OCI-LY7 (cell line): ENCODE measurements at regions of chr17 and their contacts with region 1.

Region 1: DNA sequence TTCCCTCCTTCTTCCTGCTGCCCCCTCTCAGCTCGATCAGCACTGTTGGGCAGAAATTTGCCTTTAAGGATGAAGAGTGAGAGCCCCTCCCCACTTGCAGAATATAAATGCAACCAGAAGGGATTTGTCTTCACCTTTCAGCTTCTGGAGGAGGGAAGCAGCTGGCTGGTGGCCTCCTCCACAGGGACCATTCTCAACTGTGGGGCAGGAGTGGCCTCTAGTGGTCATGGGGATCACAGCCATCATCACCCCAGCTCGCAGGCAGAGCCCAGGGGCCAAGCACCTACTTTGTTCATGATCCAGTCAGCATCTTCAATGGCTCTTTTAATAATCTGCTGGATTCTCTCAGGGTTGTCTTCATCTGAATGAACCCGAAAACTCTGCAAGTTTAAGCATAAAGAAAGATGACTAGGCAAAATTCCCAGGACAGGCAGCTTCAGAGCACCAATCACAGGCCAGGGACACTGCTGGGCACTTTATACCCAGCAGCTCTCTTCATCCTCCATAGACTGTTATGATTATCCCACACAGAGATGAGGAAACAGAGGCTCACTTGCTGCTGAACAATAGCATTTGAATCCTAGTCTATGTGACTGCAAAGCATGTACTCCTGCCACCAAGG is 13.1 kb downstream of the LYRM9 start:
- DNase-seq: peak; percentile 55
- H3K4me3 ChIP-seq: no peak overlapping the region
- H3K27ac ChIP-seq: no peak overlapping the region
- H3K4me1 ChIP-seq: no peaks in the 10 kb centered on the region
- CTCF ChIP-seq: peak; percentile 79

Region 2: GRCh38 chr17:27654654-27655524 is 225.2 kb before region 1 on chr17:
- CTCF ChIA-PET with region 1: no interaction called
- POLR2A ChIA-PET with region 1: no interaction called
- intact Hi-C with region 1: loop called (anchors 10 kb)
- DNase-seq: peak; percentile 88
- H3K4me3 ChIP-seq: no peak overlapping the region
- H3K27ac ChIP-seq: no peak overlapping the region
- H3K4me1 ChIP-seq: peaks cover 4% of the 10 kb centered on the region
- CTCF ChIP-seq: peak; percentile 99

Region 3: GRCh38 chr17:27760069-27760885 is 119.8 kb before region 1 on chr17:
- CTCF ChIA-PET with region 1: no interaction called
- POLR2A ChIA-PET with region 1: no interaction called
- intact Hi-C with region 1: loop called (anchors 1 kb)
- DNase-seq: peak; percentile 59
- H3K4me3 ChIP-seq: no peak overlapping the region
- H3K27ac ChIP-seq: no peak overlapping the region
- H3K4me1 ChIP-seq: no peaks in the 10 kb centered on the region
- CTCF ChIP-seq: peak; percentile 93

Region 4: GRCh38 chr17:27805520-27806146 is 74.5 kb before region 1 on chr17:
- CTCF ChIA-PET with region 1: interaction called, 5 read pairs
- POLR2A ChIA-PET with region 1: no interaction called
- intact Hi-C with region 1: loop called (anchors 2 kb)
- DNase-seq: peak; percentile 81
- H3K4me3 ChIP-seq: peak overlapping the region; percentile 55
- H3K27ac ChIP-seq: peak overlapping the region; percentile 41
- H3K4me1 ChIP-seq: peaks cover 13% of the 10 kb centered on the region
- CTCF ChIP-seq: peak; percentile 88

Region 5: DNA sequence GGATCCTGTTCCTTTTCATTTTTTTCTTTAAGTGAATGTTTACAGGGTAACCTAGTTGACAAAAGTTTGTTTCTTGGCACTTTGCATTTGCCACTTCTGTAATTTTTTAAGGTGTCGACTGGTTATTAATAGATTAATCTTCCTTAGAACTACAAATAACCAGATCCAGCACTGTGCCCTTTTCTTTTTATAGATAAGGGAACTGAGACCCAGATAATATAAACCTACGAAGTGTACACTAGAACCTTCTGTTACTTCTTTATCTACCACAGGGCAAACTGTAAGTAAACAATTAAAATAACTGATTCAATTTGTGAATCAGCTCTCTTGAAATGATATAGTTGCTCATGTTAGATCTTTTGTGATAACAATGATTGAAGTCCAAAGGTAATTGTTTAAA is 217.8 kb after region 1 on chr17:
- CTCF ChIA-PET with region 1: no interaction called
- POLR2A ChIA-PET with region 1: no interaction called
- intact Hi-C with region 1: no loop called
- DNase-seq: peak; percentile 17
- H3K4me3 ChIP-seq: no peak overlapping the region
- H3K27ac ChIP-seq: no peak overlapping the region
- H3K4me1 ChIP-seq: peaks cover 13% of the 10 kb centered on the region
- CTCF ChIP-seq: no peak